Activated T-helper 2 cell treated with anti-CD3 and anti-CD28 coated beads, Interferon-gamma antibody, Interleukin-2, Interleukin-4, amounts not matched to agents 10 μg/mL and 5 μg/mL and 100 μg/mL, durations not matched to agents 14 hours and 24 hours and 36 hours (primary cell): ENCODE measurements at regions of chr7 and their contacts with region 1.

Region 1: GRCh38 chr7:104983578-104984539 is 30.1 kb upstream of the KMT2E start:
- DNase-seq: peak; percentile 82
- H3K4me3 Mint-ChIP-seq: peak overlapping the region; percentile 98
- H3K27ac Mint-ChIP-seq: peak overlapping the region; percentile 100
- H3K4me1 Mint-ChIP-seq: peaks cover 67% of the 10 kb centered on the region
- H3K27me3 Mint-ChIP-seq: no peaks in the 10 kb centered on the region

Region 2: GRCh38 chr7:104397442-104397841 is 586.4 kb before region 1 on chr7:
- intact Hi-C with region 1: no loop called
- DNase-seq: no peak
- H3K4me3 Mint-ChIP-seq: no peak overlapping the region
- H3K27ac Mint-ChIP-seq: no peak overlapping the region
- H3K4me1 Mint-ChIP-seq: no peaks in the 10 kb centered on the region
- H3K27me3 Mint-ChIP-seq: peaks cover 5% of the 10 kb centered on the region

Region 3: DNA sequence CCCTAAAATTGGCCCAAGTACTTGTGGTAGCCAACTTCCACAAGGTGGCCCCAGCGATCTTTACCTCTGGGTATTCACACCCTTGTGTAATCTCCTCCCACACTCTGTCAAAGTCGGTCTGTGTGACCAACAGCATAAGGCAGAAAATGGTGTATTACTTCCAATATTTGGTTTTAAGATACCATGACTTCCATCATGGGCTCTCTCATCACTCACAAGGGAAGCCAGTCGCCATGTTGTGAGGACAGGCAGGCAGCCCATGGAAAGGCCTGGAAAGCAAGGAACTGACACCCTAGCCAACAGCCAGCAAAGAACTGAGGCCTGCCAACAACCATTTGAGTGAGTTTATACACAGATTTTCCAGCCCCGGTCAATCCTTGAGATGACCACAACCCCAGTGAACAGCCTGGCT is 60.8 kb before region 1 on chr7:
- intact Hi-C with region 1: loop called (anchors 1 kb)
- DNase-seq: peak; percentile 61
- H3K4me3 Mint-ChIP-seq: no peak overlapping the region
- H3K27ac Mint-ChIP-seq: no peak overlapping the region
- H3K4me1 Mint-ChIP-seq: peaks cover 11% of the 10 kb centered on the region
- H3K27me3 Mint-ChIP-seq: peaks cover 4% of the 10 kb centered on the region

Region 4: GRCh38 chr7:104956753-104957450 is 27.0 kb before region 1 on chr7:
- intact Hi-C with region 1: loop called (anchors 1 kb)
- DNase-seq: peak; percentile 48
- H3K4me3 Mint-ChIP-seq: peak overlapping the region; percentile 65
- H3K27ac Mint-ChIP-seq: peak overlapping the region; percentile 100
- H3K4me1 Mint-ChIP-seq: peaks cover 59% of the 10 kb centered on the region
- H3K27me3 Mint-ChIP-seq: no peaks in the 10 kb centered on the region

Region 5: DNA sequence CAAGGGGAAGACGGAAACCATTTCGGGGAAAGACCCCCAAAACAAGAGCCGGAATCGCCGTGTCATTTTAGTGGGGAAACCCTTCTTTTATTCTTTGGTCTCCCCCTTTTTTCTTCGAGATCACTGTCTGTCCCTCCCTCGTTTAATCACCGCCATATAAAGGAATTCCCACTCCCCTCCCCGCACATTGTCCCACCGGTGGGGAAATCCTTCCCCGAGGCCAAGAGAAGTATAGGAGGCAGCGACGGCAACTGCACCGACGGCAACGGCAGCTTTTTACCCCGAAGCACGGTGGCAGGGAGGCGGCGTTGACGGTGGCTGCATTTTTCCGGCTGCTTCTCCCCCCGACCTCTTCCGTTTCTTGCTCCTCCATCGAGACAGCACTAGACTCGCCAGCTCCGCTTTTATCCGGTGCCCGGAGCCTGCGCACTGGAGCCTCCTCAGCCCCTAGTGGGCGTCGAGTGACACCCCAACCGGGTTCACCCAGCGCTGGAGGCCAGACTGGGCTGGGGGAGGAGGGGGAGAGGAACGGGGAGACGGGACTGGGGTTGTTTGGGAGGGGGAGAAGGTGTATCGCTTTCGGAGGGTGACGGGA is 29.5 kb after region 1 on chr7:
- intact Hi-C with region 1: loop called (anchors 1 kb)
- DNase-seq: peak; percentile 92
- H3K4me3 Mint-ChIP-seq: peak overlapping the region; percentile 91
- H3K27ac Mint-ChIP-seq: peak overlapping the region; percentile 100
- H3K4me1 Mint-ChIP-seq: peaks cover 35% of the 10 kb centered on the region
- H3K27me3 Mint-ChIP-seq: no peaks in the 10 kb centered on the region

Region 6: GRCh38 chr7:105067691-105068090 is 83.8 kb after region 1 on chr7:
- intact Hi-C with region 1: loop called (anchors 5 kb)
- DNase-seq: no peak
- H3K4me3 Mint-ChIP-seq: no peak overlapping the region
- H3K27ac Mint-ChIP-seq: no peak overlapping the region
- H3K4me1 Mint-ChIP-seq: peaks cover 10% of the 10 kb centered on the region
- H3K27me3 Mint-ChIP-seq: no peaks in the 10 kb centered on the region

Region 7: DNA sequence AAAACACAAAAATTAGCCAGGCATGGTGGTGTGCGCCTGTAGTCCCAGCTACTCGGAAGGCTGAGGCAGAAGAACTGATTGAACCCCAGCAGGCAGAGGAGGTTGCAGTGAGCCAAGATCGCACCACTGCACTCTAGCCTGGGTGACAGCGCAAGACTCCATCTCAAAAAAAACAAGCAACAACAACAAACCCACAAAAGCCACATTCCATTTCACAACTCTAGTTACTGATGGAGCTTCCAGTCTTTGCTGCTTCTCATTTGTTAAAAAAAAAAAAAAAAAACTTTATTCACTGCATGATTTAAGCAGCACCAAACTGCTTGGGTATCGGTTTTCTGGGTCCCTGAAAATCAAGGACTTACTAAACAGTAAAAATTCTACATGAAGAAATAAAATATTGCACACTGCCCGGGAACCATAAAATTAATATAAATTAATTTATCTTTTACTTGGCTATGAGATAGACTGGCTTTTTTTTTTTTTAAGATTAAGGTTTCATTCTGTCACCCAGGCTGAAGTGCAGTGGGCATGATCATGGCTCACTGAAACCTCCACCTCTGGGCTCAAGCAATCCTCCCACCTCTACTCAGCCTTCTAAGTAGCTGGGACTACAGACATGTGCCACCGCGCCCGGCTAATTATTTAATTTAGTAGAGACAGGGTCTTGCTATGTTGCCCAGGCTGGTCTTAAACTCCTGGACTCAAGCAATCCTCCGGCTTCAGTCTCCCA is 362.9 kb after region 1 on chr7:
- intact Hi-C with region 1: loop called (anchors 5 kb)
- DNase-seq: no peak
- H3K4me3 Mint-ChIP-seq: peak overlapping the region; percentile 17
- H3K27ac Mint-ChIP-seq: peak overlapping the region; percentile 47
- H3K4me1 Mint-ChIP-seq: peaks cover 39% of the 10 kb centered on the region
- H3K27me3 Mint-ChIP-seq: no peaks in the 10 kb centered on the region